K562 (cell line): ENCODE measurements at regions of chr3 and their contacts with region 1.

Region 1: GRCh38 chr3:64030741-64031140 is 7.4 kb upstream of the PSMD6 start:
- DNase-seq: peak; percentile 69 to 74 (median 72)
- ATAC-seq: peak; percentile 98
- H3K4me3 ChIP-seq: no peak overlapping the region
- H3K27ac ChIP-seq: no peak overlapping the region
- H3K4me1 ChIP-seq: peaks cover 0 to 3% of the 10 kb centered on the region in 2 experiments; a peak in 1 of 5 replicates
- H3K27me3 ChIP-seq: no peaks in the 10 kb centered on the region; a peak in 1 of 5 replicates
- CTCF ChIP-seq: peak; percentile 73 to 77 (median 73)
- EP300 ChIP-seq: no peak
- POLR2A ChIP-seq: no peak
- RAD21 ChIP-seq: peak; percentile 75

Region 2: DNA sequence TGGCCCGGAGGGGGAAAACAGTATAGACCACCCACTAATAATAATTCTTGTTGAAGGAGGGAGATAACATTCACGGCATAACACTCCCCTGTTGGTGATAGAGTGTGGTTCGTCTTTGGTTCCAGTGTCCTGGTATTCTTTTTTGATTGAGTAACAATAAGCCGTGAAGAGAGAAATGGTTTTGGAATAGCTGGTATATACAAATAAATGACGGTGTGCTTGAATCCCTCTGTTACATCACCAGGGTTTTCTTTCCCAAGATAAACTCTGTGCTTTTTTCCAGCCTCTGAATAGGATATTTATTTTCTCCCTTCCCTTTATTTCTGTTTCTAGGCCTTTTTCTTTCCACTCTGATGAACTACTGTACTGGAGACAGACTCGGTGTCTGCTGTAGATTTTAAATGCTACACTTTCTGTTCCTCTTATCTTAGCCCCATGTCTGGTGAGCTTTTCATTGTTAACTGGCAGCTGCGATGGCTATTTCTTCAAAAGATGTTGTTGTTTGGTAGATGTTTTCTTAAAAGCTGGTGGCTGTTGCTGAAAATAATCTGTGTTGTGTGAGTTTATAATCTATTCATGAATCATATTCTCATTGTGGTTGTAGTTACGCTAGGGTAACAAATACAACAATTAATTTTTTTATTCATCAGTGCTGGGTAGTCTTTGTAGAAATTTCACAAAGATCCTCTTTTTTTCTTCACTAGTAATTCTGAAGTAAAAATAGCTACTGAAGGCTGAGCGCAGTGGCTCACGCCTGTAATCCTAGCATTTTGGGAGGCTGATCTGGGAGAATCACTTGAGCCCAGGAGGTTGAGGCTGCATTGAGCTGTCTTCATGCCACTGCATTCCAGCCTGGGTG is 103.1 kb before region 1 on chr3:
- CTCF ChIA-PET with region 1: no interaction called
- POLR2A ChIA-PET with region 1: no interaction called
- in situ Hi-C with region 1: no loop called
- intact Hi-C with region 1: no loop called
- DNase-seq: no peak
- ATAC-seq: no peak
- H3K4me3 ChIP-seq: no peak overlapping the region
- H3K27ac ChIP-seq: no peak overlapping the region
- H3K4me1 ChIP-seq: no peaks in the 10 kb centered on the region; a peak in 1 of 5 replicates
- H3K27me3 ChIP-seq: no peaks in the 10 kb centered on the region
- CTCF ChIP-seq: no peak
- EP300 ChIP-seq: no peak
- POLR2A ChIP-seq: no peak
- RAD21 ChIP-seq: no peak

Region 3: GRCh38 chr3:64399205-64399800 is 368.6 kb after region 1 on chr3:
- CTCF ChIA-PET with region 1: interaction called, 4 read pairs
- POLR2A ChIA-PET with region 1: no interaction called
- in situ Hi-C with region 1: no loop called
- intact Hi-C with region 1: loop called (anchors 2 kb)
- DNase-seq: peak; percentile 11 to 19 (median 14)
- ATAC-seq: 0 out of 3 replicates have a peak, but pooled peaks have one; percentile 40
- H3K4me3 ChIP-seq: no peak overlapping the region
- H3K27ac ChIP-seq: no peak overlapping the region
- H3K4me1 ChIP-seq: no peaks in the 10 kb centered on the region
- H3K27me3 ChIP-seq: no peaks in the 10 kb centered on the region
- CTCF ChIP-seq: peak; percentile 30 to 50 (median 31); a peak in 4 of 6 replicates
- EP300 ChIP-seq: no peak
- POLR2A ChIP-seq: no peak
- RAD21 ChIP-seq: peak; percentile 23 to 46; a peak in 3 of 4 replicates

Region 4: DNA sequence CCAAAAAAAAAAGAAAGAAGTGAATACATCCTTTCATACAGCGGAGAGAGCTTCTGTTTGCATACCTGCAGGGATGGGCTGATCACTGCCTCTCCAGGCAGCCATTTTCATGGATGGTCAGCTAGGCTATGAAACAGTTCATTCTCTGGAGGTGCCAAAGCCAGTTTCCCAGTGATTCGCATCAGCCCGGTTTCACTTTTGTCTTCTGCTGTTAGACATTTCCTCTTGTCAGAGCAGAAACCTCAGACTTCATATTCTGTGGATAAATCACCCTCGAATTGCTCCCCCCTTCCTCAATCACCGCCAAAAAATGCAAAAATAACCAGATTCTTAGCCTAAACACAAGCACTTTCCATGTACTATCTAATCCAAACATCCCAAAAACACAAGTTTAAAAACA is 431.5 kb after region 1 on chr3:
- CTCF ChIA-PET with region 1: no interaction called
- POLR2A ChIA-PET with region 1: no interaction called
- in situ Hi-C with region 1: no loop called
- intact Hi-C with region 1: loop called (anchors 5 kb)
- DNase-seq: no peak
- ATAC-seq: no peak
- H3K4me3 ChIP-seq: no peak overlapping the region
- H3K27ac ChIP-seq: no peak overlapping the region
- H3K4me1 ChIP-seq: no peaks in the 10 kb centered on the region
- H3K27me3 ChIP-seq: no peaks in the 10 kb centered on the region
- CTCF ChIP-seq: no peak
- EP300 ChIP-seq: no peak
- POLR2A ChIP-seq: no peak
- RAD21 ChIP-seq: no peak

Region 5: GRCh38 chr3:64484289-64484992 is 453.7 kb after region 1 on chr3:
- CTCF ChIA-PET with region 1: interaction called, 7 read pairs
- POLR2A ChIA-PET with region 1: no interaction called
- in situ Hi-C with region 1: loop called (anchors 5 kb)
- intact Hi-C with region 1: loop called (anchors 1 kb)
- DNase-seq: peak; percentile 41 to 60 (median 50)
- ATAC-seq: peak; percentile 95
- H3K4me3 ChIP-seq: no peak overlapping the region
- H3K27ac ChIP-seq: no peak overlapping the region
- H3K4me1 ChIP-seq: no peaks in the 10 kb centered on the region
- H3K27me3 ChIP-seq: no peaks in the 10 kb centered on the region; a peak in 1 of 5 replicates
- CTCF ChIP-seq: peak; percentile 61 to 74 (median 73)
- EP300 ChIP-seq: no peak
- POLR2A ChIP-seq: no peak
- RAD21 ChIP-seq: peak; percentile 67 to 78